ENCODE measurements at regions of chr15 and their contacts with region 1.

Region 1: DNA sequence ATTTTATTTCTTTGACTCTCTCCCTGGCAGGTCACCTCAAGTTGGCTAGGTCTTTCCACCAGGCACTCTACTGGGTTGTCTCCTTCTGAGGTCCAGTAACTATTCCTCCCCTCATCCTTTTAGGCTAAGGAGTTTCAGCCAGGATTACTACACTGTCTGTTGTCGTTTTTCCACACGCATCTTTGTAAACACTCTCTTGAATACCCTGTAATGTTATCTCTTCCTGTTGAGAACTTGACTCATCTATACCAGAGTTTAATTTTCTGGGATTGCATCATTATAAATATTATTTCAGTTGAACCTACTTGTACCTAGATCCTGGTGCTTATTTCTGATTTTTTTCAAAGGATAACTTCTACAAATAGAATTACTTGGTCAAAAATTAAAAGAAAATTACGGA is 138.3 kb downstream of the SQOR start:
- DNase-seq: no peak
- H3K4me3 ChIP-seq: no peak overlapping the region
- H3K27ac ChIP-seq: no peak overlapping the region
- H3K4me1 ChIP-seq: no peaks in the 10 kb centered on the region
- H3K27me3 ChIP-seq: no peaks in the 10 kb centered on the region
- CTCF ChIP-seq: no peak
- POLR2A ChIP-seq: no peak

Region 2: DNA sequence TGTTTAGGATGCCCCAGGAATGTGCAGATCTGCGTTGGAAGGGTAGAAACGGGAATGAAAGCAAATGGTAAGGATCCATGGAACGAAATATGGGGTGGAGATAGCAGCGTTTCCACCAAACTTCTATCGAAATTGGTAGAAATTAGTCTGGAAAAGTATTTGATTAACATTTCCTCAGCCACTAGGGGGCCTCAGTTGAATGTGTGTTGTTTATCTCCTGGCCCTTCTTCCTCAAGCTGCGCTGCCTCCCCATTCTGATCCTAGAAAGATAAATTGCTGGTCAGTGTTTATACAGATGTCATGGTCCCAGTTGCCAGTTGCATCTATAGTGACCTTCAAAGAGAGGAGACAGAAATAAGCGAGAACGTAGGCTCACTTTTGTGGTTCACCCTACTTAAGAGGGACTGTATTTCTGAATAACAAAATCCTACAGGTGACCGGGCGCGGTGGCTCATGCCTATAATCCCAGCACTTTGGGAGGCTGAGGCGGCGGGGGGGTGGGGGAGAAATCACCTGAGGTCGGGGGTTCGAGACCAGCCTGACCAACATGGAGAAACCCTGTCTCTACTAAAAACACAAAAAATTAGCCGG is 318.8 kb after region 1 on chr15:
- intact Hi-C with region 1: loop called (anchors 5 kb)
- DNase-seq: no peak
- H3K4me3 ChIP-seq: no peak overlapping the region
- H3K27ac ChIP-seq: no peak overlapping the region
- H3K4me1 ChIP-seq: no peaks in the 10 kb centered on the region
- H3K27me3 ChIP-seq: no peaks in the 10 kb centered on the region
- CTCF ChIP-seq: peak; percentile 20 to 32 (median 23)
- POLR2A ChIP-seq: no peak

Measured in breast epithelium (tissue), 4 donors.